ENCODE measurements at regions of chr2 and their contacts with region 1.

Region 1: DNA sequence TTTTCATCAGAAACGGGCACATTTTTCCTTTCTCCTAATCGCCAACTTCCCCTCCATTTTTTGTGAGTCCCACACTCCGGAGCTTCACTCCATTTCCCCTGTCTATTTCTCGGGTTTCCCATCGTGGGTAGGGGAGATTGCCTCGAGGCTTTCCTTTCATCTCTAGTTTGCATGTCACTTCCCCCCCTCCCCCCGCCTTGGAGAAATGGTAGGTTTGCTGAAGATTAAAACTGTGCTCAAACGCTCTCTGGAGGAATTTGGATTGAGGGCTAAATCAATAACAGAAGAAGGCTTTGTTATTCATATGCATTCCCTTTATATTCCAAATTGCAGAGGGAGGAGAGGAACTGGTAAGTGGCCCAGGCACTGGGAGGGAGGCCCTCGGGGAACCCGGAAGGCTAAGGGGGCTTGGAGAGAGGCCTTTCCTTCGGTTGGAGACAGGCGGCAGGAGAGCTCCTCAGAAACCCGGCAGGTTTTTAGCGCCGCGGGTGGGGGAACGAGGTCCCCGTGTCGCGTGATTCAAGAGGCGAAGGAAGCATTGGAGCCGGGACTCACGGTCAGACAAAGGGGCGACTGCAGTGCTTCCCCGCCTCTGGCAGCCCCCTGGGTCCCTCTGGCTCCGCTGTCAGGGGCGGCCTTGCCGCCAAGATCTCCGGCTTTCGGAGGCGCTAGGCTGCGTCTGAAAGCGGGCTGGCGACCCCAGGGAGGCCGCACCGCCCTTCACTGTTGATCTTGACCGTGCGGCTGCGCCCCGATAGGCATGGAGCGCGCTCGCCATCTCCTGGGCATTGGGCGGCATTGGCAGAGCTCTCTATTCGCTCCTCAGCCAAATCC is 2.4 kb upstream of the HOXD12 start:
- DNase-seq: peak; percentile 32 to 77 (median 50)
- ATAC-seq: peak; percentile 65 to 89 (median 86)
- H3K4me3 ChIP-seq: peak overlapping the region in 11 of 12 donors; percentile 9 to 52 (median 40)
- H3K27ac ChIP-seq: peak overlapping the region in 1 of 12 donors; percentile 86
- H3K4me1 ChIP-seq: peaks cover 0 to 51% (median 18%) of the 10 kb centered on the region in 12 donors
- H3K27me3 ChIP-seq: peaks cover 95 to 100% (median 99%) of the 10 kb centered on the region in 9 donors
- CTCF ChIP-seq: peak; percentile 55 to 84 (median 74)
- POLR2A ChIP-seq: no peak

Region 2: GRCh38 chr2:175203621-175204496 is 893.3 kb before region 1 on chr2:
- intact Hi-C with region 1: loop called in 1 of 10 experiments (anchors 5 kb)
- DNase-seq: peak in 3 of 5 donors; percentile 20 to 40 (median 39)
- ATAC-seq: peak; percentile 43 to 80 (median 74)
- H3K4me3 ChIP-seq: no peak overlapping the region
- H3K27ac ChIP-seq: no peak overlapping the region
- H3K4me1 ChIP-seq: peaks cover 0 to 11% (median 0%) of the 10 kb centered on the region in 12 donors
- H3K27me3 ChIP-seq: peaks cover 0 to 20% (median 0%) of the 10 kb centered on the region in 9 donors
- CTCF ChIP-seq: peak; percentile 23 to 53 (median 38)
- POLR2A ChIP-seq: no peak

Region 3: GRCh38 chr2:175251425-175252041 is 845.7 kb before region 1 on chr2:
- intact Hi-C with region 1: loop called in 4 of 10 experiments (anchors 5 to 10 kb)
- DNase-seq: no peak
- ATAC-seq: no peak
- H3K4me3 ChIP-seq: no peak overlapping the region
- H3K27ac ChIP-seq: no peak overlapping the region
- H3K4me1 ChIP-seq: peaks cover 0 to 2% (median 0%) of the 10 kb centered on the region in 12 donors
- H3K27me3 ChIP-seq: peaks cover 0 to 18% (median 0%) of the 10 kb centered on the region in 9 donors
- CTCF ChIP-seq: peak; percentile 36 to 66 (median 54)
- POLR2A ChIP-seq: no peak

Region 4: DNA sequence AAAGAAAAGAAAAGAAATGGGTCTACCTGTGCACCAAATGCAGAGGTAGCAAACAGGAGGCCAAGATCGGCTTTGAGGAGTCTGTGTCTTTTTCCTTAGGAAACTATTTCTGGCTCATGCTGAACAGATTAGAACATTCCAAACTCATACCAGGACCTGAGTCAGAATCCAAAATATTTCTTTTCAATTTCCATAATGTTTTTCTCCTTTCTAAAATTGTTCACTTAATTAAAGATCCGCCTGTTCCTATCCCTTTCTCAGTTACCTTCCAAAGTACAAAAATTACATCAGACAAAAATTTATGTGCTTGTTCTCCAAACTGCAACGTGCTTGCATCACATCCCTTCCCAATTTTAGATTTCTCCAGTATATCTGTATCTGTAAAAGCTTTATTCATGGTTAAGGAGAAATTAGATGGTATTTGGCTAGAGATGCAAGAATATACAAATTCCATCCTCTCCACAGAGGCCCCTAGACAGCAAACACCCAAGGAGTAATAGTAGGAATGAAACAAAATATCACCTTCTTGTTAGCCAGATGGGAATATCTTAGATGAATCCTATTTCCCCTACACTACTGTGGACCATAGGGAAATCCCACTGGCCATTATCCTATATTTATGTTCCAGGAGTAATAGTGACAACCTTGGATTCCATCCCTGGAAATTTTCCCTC is 225.7 kb before region 1 on chr2:
- intact Hi-C with region 1: no loop called
- DNase-seq: no peak
- ATAC-seq: peak in 1 of 4 donors; percentile 13
- H3K4me3 ChIP-seq: no peak overlapping the region
- H3K27ac ChIP-seq: peak overlapping the region in 1 of 12 donors; percentile 27
- H3K4me1 ChIP-seq: peaks cover 0 to 25% (median 7%) of the 10 kb centered on the region in 12 donors
- H3K27me3 ChIP-seq: no peaks in the 10 kb centered on the region
- CTCF ChIP-seq: no peak
- POLR2A ChIP-seq: no peak